ENCODE measurements at regions of chr11 and their contacts with region 1.

Region 1: GRCh38 chr11:59668950-59669610 is at the start of gene PATL1:
- DNase-seq: peak; percentile 99
- H3K4me3 ChIP-seq: peak within 1 kb of the TSS; percentile 98
- H3K27ac ChIP-seq: peak within 1 kb of the TSS; percentile 84 to 94
- H3K4me1 ChIP-seq: peaks cover 6% of the 10 kb centered on the region
- H3K27me3 ChIP-seq: no peaks in the 10 kb centered on the region
- CTCF ChIP-seq: no peak
- EP300 ChIP-seq: peak; percentile 44
- POLR2A ChIP-seq: peak; percentile 79
- total RNA-seq, gene PATL1: 11.1 to 40.3 (median 30.8) TPM

Region 2: GRCh38 chr11:59534676-59535075 is 134.4 kb before region 1 on chr11:
- intact Hi-C with region 1: loop called in 2 of 4 experiments (anchors 2 to 5 kb)
- DNase-seq: no peak
- H3K4me3 ChIP-seq: no peak overlapping the region
- H3K27ac ChIP-seq: no peak overlapping the region
- H3K4me1 ChIP-seq: peaks cover 3% of the 10 kb centered on the region
- H3K27me3 ChIP-seq: no peaks in the 10 kb centered on the region
- CTCF ChIP-seq: no peak
- EP300 ChIP-seq: no peak
- POLR2A ChIP-seq: no peak

Region 3: GRCh38 chr11:59545179-59546020 is 123.7 kb before region 1 on chr11:
- intact Hi-C with region 1: loop called in 1 of 4 experiments (anchors 10 kb)
- DNase-seq: peak; percentile 78 to 89 (median 84)
- H3K4me3 ChIP-seq: no peak overlapping the region
- H3K27ac ChIP-seq: peak overlapping the region; percentile 23 to 91
- H3K4me1 ChIP-seq: peaks cover 13% of the 10 kb centered on the region
- H3K27me3 ChIP-seq: no peaks in the 10 kb centered on the region
- CTCF ChIP-seq: no peak
- EP300 ChIP-seq: no peak
- POLR2A ChIP-seq: peak; percentile 60

Region 4: DNA sequence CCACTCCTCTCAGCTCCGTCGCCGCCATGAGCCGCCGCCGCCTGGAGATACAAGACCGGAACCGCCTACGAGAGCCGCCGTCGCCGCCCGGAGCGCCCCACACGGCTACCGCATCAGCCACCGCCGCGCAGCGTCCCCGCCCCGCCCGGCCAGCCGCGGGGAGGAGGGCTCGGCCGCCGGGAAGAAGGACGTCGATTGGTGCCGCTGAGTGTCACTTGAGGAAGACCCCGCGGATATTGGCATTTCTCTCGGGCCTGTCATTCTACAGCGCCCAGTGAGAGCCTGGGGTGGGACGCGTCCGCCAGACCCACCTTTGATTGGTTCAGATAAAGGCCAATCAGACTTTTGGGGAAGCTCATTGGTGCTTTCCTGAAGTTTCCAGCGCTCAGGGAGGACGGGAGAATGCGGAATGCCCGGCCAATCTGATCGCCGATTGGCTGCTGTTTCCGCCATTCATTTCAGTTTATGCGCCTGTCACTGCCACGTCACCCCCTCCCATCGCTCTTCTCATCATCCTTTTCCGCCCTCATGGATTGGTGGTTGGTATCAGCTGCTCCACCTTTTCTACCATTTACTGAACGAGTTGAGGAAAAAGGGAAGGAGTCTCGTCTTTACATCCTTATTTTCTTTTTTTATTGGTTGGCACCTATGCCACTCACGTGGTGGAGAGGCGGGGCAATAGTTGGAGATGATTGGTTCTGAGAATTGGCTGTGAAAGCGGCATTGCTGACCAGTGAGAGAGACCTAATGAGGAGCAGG is 53.3 kb before region 1 on chr11 and contains the start of gene OSBP:
- intact Hi-C with region 1: loop called in 1 of 4 experiments (anchors 10 kb)
- DNase-seq: peak; percentile 99 to 100 (median 99)
- H3K4me3 ChIP-seq: peak within 1 kb of the TSS; percentile 84
- H3K27ac ChIP-seq: peak within 1 kb of the TSS; percentile 77 to 92
- H3K4me1 ChIP-seq: peaks cover 3% of the 10 kb centered on the region
- H3K27me3 ChIP-seq: no peaks in the 10 kb centered on the region
- CTCF ChIP-seq: peak in 1 of 3 donors; percentile 45
- EP300 ChIP-seq: no peak
- POLR2A ChIP-seq: peak; percentile 74
- total RNA-seq, gene OSBP: 27.1 to 46.4 (median 42.4) TPM

Measured in ovary (tissue), 10 donors.